PC-9 (cell line): ENCODE measurements at regions of chr9 and their contacts with region 1.

Region 1: DNA sequence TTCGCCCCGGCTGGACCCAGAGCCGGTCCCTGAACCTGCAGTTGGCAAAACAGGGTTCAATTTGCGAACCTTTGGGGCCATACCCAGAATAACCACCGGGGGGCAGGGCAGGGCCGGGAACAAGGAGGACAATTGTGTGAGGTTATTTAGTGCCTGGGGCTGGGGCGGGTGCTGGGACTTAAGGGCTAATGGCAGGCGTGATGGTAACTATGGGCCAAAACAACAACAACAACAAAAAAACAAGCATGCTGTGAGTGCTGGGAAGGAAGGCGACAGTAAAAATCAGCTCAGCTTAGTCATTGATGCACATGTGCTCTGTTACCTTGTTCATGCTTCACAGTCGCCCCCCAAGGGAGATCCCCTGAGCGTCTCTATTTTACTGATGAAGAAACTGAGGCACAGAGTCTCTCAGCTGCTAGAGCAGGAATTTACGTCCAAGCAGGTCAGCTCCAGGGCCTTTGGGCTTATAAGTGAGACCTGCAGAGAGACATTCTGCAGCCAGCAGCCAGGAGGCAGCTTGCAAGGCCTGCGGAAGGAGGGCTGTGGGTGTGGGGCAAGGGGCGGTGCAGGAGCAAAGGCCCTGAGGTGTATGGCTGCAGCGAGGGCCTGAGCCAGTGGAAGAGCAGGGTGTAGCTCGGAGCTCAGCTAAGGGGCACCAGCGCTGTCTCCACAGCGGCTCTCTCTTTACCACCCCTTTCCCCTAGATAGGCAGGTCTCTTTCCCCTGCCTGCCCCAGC is 106.0 kb downstream of the PHF2 start:
- DNase-seq: peak; percentile 68 to 79
- H3K4me3 ChIP-seq: no peak overlapping the region
- H3K27ac ChIP-seq: no peak overlapping the region
- H3K4me1 ChIP-seq: no peaks in the 10 kb centered on the region
- H3K27me3 ChIP-seq: 0 out of 2 replicates have a peak, but pooled peaks cover 5% of the 10 kb centered on the region
- CTCF ChIP-seq: peak; percentile 89

Region 2: DNA sequence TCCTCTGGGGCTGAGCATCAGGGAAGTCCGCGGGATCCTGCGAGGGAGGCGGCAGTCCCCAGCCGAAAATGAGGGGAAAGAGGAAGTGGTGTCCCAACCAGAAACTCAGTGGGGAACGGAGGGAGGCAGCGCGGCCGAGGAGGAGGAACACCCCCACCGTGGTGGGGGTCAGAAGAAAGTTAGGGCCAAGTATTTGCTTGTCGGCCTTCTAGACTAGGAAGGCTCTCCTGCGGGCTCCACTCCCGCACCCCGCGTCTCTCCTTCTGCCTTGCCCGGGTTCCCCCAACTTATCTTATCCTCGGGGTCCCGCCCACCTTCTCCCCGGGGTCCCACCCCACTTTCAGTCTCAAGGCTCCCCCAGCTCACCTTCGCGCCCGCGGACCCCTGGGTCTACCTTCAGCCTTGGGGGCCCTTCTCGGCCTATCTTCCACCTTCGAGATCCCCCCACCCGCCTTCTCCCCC is 106.6 kb before region 1 on chr9:
- CTCF ChIA-PET with region 1: no interaction called
- POLR2A ChIA-PET with region 1: no interaction called
- intact Hi-C with region 1: loop called (anchors 5 kb)
- DNase-seq: peak in 1 of 2 experiments; percentile 58
- H3K4me3 ChIP-seq: peak overlapping the region; percentile 87
- H3K27ac ChIP-seq: no peak overlapping the region
- H3K4me1 ChIP-seq: peaks cover 14% of the 10 kb centered on the region
- H3K27me3 ChIP-seq: no peaks in the 10 kb centered on the region
- CTCF ChIP-seq: no peak

Region 3: DNA sequence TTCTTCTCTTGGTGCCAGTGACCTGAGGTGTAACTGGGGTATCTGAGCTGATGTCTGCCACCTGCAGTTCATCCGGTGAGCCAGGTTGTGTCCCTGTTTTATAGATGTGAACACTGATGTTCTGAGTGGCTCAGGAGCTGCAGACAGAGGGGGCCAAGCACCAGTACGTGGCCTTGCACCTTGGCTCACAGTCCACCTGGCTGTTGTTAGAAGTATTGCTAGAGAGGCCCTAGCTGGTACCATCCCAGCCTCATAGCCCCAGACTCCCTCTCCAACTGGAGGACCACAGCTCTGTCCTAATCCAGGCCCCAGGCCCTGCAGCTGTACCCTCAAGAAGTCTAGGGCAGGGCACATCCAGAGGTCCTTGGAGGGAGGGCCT is 89.8 kb before region 1 on chr9:
- CTCF ChIA-PET with region 1: interaction called, 20 read pairs
- POLR2A ChIA-PET with region 1: no interaction called
- intact Hi-C with region 1: no loop called
- DNase-seq: no peak
- H3K4me3 ChIP-seq: no peak overlapping the region
- H3K27ac ChIP-seq: no peak overlapping the region
- H3K4me1 ChIP-seq: no peaks in the 10 kb centered on the region
- H3K27me3 ChIP-seq: no peaks in the 10 kb centered on the region
- CTCF ChIP-seq: no peak

Region 4: DNA sequence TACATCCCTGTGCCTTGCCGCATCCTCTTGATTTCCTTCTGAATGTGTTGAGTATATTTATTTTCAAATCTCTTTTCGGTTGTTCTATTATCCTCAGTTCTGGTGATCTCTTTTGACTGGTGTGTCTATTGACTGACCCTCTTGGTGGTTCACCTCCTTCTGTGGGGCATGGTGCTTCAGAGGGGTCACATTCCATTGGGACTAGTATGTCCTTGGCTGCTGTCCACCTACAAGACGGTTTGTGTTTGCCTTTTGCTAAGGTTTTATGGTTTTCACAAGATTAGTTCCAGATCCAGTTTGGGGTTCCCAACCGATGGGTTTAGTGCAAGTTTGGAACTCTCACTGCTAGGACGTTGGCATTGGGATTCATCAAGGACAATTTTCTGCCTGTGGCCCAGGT is 39.4 kb before region 1 on chr9:
- CTCF ChIA-PET with region 1: no interaction called
- POLR2A ChIA-PET with region 1: no interaction called
- intact Hi-C with region 1: no loop called
- DNase-seq: no peak
- H3K4me3 ChIP-seq: no peak overlapping the region
- H3K27ac ChIP-seq: no peak overlapping the region
- H3K4me1 ChIP-seq: no peaks in the 10 kb centered on the region
- H3K27me3 ChIP-seq: no peaks in the 10 kb centered on the region
- CTCF ChIP-seq: no peak

Region 5: DNA sequence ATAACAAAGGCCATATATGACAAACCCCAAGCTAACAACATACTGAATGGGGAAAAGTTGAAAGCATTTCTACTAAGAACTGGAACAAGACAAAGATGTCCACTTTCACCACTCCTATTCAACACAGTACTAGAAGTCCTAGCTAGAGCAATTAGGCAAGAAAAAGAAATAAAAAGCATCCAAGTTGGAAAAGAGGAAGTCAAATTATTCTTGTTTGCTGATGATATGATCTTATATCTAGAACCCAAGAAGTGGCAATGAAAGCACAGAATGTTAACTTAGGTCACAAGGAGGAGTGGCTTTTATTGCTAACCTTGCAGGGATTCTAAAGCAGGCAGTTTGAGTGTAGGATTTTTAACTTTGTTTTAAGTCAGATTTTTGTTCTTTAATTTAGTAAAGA is 308.0 kb after region 1 on chr9:
- CTCF ChIA-PET with region 1: no interaction called
- POLR2A ChIA-PET with region 1: no interaction called
- intact Hi-C with region 1: no loop called
- DNase-seq: no peak
- H3K4me3 ChIP-seq: no peak overlapping the region
- H3K27ac ChIP-seq: no peak overlapping the region
- H3K4me1 ChIP-seq: no peaks in the 10 kb centered on the region
- H3K27me3 ChIP-seq: 0 out of 2 replicates have a peak, but pooled peaks cover 6% of the 10 kb centered on the region
- CTCF ChIP-seq: no peak

Region 6: DNA sequence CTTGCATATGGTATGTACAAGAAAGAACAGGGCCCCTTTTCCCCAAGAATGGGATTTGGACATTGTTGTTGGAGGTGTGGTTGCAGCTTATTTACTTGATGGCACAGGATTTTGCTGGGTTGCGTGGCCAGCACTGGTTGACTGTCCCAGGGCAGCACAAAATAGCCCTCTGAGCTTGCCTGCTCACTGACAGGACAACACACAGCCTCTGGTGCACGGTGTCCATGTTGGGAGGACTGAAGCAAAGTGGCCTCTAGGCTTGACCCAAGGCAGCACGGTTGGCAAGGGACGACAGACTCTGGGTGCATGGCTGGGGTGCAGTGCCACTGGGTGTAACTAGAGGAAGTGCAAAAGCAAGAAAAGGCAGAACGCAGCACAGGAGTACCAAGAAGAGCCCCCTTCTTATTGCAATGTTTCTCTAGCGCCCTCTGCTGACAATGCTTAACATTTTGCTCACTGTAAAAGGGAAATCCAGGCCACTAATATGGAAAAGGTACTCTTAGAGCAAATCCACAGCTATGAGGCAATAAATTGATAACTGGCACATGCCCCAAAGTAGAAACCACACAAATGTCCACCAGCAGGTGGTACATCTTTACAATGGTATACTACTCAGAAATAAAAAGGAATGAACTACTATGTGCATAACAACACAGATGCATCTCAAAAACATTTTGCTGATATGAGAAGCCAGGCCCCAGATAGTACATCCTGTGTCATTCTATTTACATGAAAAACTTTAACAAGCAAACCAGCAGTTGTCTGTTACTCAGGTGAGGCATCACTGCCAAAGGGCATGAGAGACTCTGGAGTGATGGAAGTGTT is 320.1 kb after region 1 on chr9:
- CTCF ChIA-PET with region 1: interaction called, 4 read pairs
- POLR2A ChIA-PET with region 1: no interaction called
- intact Hi-C with region 1: loop called (anchors 1 kb)
- DNase-seq: peak in 1 of 2 experiments; percentile 29
- H3K4me3 ChIP-seq: no peak overlapping the region
- H3K27ac ChIP-seq: no peak overlapping the region
- H3K4me1 ChIP-seq: 0 out of 2 replicates have a peak, but pooled peaks cover 4% of the 10 kb centered on the region
- H3K27me3 ChIP-seq: 0 out of 2 replicates have a peak, but pooled peaks cover 4% of the 10 kb centered on the region
- CTCF ChIP-seq: peak; percentile 68

Region 7: DNA sequence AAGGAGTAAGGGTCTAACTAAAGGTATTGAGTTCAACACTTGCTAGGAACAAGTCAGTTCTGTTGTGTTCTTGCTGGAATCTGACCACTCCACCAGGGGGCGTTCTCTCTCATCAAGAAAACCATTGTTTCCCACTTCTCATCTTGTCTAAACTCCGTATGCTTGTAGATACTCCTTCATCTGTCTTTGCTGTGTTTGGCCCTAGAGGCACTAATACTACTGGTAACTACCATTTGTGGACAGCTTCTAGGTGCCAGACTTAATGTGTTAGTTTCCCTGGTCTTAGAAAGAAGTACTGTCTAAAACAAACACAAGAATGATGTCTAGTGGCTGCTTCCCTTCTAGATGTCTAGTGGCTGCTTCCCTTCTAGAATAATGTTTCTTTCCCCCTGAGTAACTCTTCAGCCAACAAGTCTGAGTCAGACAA is 383.1 kb after region 1 on chr9:
- CTCF ChIA-PET with region 1: no interaction called
- POLR2A ChIA-PET with region 1: no interaction called
- intact Hi-C with region 1: loop called (anchors 5 kb)
- DNase-seq: peak; percentile 48 to 63
- H3K4me3 ChIP-seq: no peak overlapping the region
- H3K27ac ChIP-seq: no peak overlapping the region
- H3K4me1 ChIP-seq: no peaks in the 10 kb centered on the region
- H3K27me3 ChIP-seq: no peaks in the 10 kb centered on the region
- CTCF ChIP-seq: peak; percentile 90

Region 8: GRCh38 chr9:94213511-94214124 is 531.2 kb after region 1 on chr9:
- CTCF ChIA-PET with region 1: no interaction called
- POLR2A ChIA-PET with region 1: no interaction called
- intact Hi-C with region 1: loop called (anchors 1 kb)
- DNase-seq: peak; percentile 60 to 65
- H3K4me3 ChIP-seq: no peak overlapping the region
- H3K27ac ChIP-seq: no peak overlapping the region
- H3K4me1 ChIP-seq: no peaks in the 10 kb centered on the region
- H3K27me3 ChIP-seq: no peaks in the 10 kb centered on the region
- CTCF ChIP-seq: peak; percentile 87

Region 9: GRCh38 chr9:94534901-94535300 is 852.5 kb after region 1 on chr9:
- CTCF ChIA-PET with region 1: no interaction called
- POLR2A ChIA-PET with region 1: no interaction called
- intact Hi-C with region 1: loop called (anchors 1 kb)
- DNase-seq: no peak
- H3K4me3 ChIP-seq: no peak overlapping the region
- H3K27ac ChIP-seq: no peak overlapping the region
- H3K4me1 ChIP-seq: no peaks in the 10 kb centered on the region
- H3K27me3 ChIP-seq: no peaks in the 10 kb centered on the region
- CTCF ChIP-seq: no peak